ENCODE measurements at regions of chr17 and their contacts with region 1.

Region 1: DNA sequence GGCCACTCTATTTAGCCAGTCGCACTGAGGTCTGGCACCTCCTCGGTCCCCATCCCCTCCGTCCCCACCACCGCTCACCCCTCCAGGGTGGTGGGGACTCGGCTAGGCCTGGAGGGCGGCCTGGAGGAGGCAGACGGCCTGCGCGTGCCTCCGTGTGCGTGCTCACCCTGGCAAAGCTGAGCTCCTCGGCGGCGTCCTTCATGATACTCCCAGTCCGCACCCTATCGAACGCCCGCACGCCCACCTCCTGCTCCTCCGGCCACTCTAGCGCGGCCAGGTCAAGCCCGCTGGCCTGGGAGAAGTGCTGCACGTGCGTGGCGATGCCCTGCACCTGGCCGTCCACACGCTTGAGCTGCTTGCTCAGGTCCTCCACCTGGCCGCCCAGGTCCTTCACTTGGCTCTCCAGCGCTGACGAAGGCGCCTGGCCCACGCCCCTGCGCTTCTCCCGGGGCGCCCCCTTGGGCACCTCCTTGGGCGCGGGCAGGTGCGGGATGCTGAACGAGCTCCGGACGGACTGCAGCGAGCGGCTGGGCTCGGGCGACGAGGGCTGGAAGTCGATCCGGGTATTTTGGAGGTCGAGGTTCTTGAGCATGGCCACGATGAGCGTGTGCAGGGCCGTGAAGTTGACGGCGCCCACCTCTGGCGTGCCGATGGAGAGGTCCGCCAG is 644 bp downstream of the QRICH2 start:
- DNase-seq: no peak
- H3K4me3 ChIP-seq: no peak overlapping the region
- H3K27ac ChIP-seq: no peak overlapping the region
- H3K4me1 ChIP-seq: peaks cover 3% of the 10 kb centered on the region
- H3K27me3 ChIP-seq: no peaks in the 10 kb centered on the region
- CTCF ChIP-seq: no peak

Region 2: DNA sequence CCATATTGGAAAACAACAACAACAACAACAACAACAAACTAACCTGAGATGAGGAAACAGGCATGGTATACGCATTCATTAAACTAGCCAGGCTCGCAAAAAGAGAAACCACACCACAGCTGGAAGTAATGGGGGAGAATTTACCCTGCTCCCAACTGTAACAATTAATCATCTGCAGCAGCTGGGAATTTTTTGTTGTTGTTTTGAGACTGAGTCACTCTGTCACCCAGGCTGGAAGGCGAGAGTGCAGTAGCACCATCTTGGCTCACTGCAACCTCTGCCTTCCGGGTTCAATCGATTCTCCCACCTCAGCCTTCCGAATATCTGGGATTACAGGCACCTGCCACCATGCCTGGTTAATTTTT is 30.0 kb after region 1 on chr17:
- CTCF ChIA-PET with region 1: no interaction called
- POLR2A ChIA-PET with region 1: no interaction called
- intact Hi-C with region 1: no loop called
- DNase-seq: no peak
- H3K4me3 ChIP-seq: no peak overlapping the region
- H3K27ac ChIP-seq: no peak overlapping the region
- H3K4me1 ChIP-seq: no peaks in the 10 kb centered on the region
- H3K27me3 ChIP-seq: no peaks in the 10 kb centered on the region
- CTCF ChIP-seq: no peak

Region 3: DNA sequence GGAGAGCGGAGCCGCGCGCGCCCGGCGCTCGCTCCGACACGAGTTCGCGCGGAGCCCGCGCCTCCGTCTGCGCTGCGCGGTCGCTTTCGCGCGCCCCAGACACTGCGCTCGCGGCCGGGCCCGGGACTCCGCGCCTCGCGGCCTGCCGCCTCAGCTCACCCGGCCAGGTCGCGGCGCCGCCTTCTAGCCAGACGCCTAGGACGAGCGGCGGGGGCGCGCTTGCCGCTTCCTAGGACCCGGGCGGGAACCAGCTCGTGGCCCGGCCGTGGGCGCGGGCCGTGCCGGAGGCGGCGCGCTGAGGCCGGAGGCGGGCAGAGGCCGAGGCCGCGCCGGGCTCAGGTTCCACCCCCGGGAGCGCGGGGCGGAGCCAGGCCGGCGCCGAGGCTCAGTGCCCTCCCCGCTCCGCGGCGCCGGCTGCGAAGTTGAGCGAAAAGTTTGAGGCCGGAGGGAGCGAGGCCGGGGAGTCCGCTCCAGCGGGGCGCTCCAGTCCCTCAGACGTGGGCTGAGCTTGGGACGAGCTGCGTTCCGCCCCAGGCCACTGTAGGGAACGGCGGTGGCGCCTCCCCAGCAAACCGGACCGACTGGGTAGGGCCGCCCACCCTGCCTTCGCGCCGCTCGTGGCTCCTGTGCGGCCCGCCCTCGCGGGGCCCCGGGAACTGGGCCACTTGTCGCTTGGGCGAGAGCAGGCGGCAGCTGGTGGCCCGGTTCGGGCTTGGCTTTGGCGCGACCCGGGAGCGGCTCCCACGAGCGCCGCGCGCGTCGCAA is 77.0 kb after region 1 on chr17 and contains the start of gene SPHK1:
- CTCF ChIA-PET with region 1: no interaction called
- POLR2A ChIA-PET with region 1: no interaction called
- intact Hi-C with region 1: loop called (anchors 5 kb)
- DNase-seq: peak; percentile 74
- H3K4me3 ChIP-seq: peak within 1 kb of the TSS; percentile 48
- H3K27ac ChIP-seq: no peak within 1 kb of the TSS
- H3K4me1 ChIP-seq: peaks cover 24% of the 10 kb centered on the region
- H3K27me3 ChIP-seq: peaks cover 19% of the 10 kb centered on the region
- CTCF ChIP-seq: no peak
- total RNA-seq, gene SPHK1: 0.50 and 0.54 TPM in 2 replicates

Region 4: GRCh38 chr17:76417499-76418143 is 110.2 kb after region 1 on chr17:
- CTCF ChIA-PET with region 1: interaction called, 11 read pairs
- POLR2A ChIA-PET with region 1: no interaction called
- intact Hi-C with region 1: no loop called
- DNase-seq: no peak
- H3K4me3 ChIP-seq: no peak overlapping the region
- H3K27ac ChIP-seq: no peak overlapping the region
- H3K4me1 ChIP-seq: peaks cover 19% of the 10 kb centered on the region
- H3K27me3 ChIP-seq: no peaks in the 10 kb centered on the region
- CTCF ChIP-seq: no peak

Region 5: GRCh38 chr17:76452660-76453430 is 145.4 kb after region 1 on chr17 and contains the start of gene UBE2O:
- CTCF ChIA-PET with region 1: no interaction called
- POLR2A ChIA-PET with region 1: no interaction called
- intact Hi-C with region 1: no loop called
- DNase-seq: peak; percentile 93
- H3K4me3 ChIP-seq: peak within 1 kb of the TSS; percentile 84
- H3K27ac ChIP-seq: peak within 1 kb of the TSS; percentile 83
- H3K4me1 ChIP-seq: peaks cover 21% of the 10 kb centered on the region
- H3K27me3 ChIP-seq: no peaks in the 10 kb centered on the region
- CTCF ChIP-seq: peak; percentile 46
- total RNA-seq, gene UBE2O: 56.9 and 57.4 TPM in 2 replicates

Region 6: GRCh38 chr17:76501018-76501826 is 193.8 kb after region 1 on chr17 and contains the start of gene RHBDF2:
- CTCF ChIA-PET with region 1: no interaction called
- POLR2A ChIA-PET with region 1: no interaction called
- intact Hi-C with region 1: loop called (anchors 5 kb)
- DNase-seq: peak; percentile 83
- H3K4me3 ChIP-seq: peak within 1 kb of the TSS; percentile 69
- H3K27ac ChIP-seq: peak within 1 kb of the TSS; percentile 47
- H3K4me1 ChIP-seq: peaks cover 46% of the 10 kb centered on the region
- H3K27me3 ChIP-seq: no peaks in the 10 kb centered on the region
- CTCF ChIP-seq: no peak
- total RNA-seq, gene RHBDF2: 20.4 and 26.5 TPM in 2 replicates

Region 7: GRCh38 chr17:76784926-76785325 is 477.5 kb after region 1 on chr17:
- CTCF ChIA-PET with region 1: interaction called, 10 read pairs
- POLR2A ChIA-PET with region 1: no interaction called
- intact Hi-C with region 1: no loop called
- DNase-seq: no peak
- H3K4me3 ChIP-seq: no peak overlapping the region
- H3K27ac ChIP-seq: no peak overlapping the region
- H3K4me1 ChIP-seq: no peaks in the 10 kb centered on the region
- H3K27me3 ChIP-seq: no peaks in the 10 kb centered on the region
- CTCF ChIP-seq: no peak